Upper lobe of right lung (tissue), 1 donor: ENCODE measurements at regions of chr11 and their contacts with region 1.

Region 1: DNA sequence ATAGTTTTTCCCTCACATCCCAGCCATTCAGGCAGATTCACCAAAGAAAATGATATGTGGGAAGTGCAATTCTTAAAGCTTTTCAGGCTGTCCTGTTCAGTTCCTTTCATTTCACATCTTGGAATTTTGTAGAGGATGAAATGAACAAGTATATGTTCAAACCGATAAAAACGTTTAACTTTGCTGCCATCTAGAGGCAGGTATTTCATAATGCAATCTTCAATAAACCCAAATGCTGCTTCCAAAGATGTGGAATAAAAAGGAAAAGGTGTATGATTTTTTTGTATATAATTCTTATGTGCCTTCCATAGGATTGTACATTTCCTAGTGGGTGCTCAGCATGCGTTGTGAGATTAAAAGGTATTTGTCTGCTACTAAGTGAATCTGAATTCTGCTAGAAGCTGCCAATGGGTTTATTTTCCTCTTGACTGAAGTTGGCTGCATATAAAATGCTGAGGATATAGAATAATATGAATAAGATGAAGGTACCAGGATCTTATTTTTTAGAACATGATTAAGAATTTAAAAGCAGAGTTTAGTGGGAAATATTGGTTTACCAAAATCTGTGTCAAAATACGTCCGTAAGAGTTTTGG is 199.3 kb downstream of the PGR start:
- DNase-seq: no peak
- ATAC-seq: peak; percentile 56
- H3K4me3 ChIP-seq: no peak overlapping the region
- H3K27ac ChIP-seq: no peak overlapping the region
- H3K4me1 ChIP-seq: no peaks in the 10 kb centered on the region
- H3K27me3 ChIP-seq: no peaks in the 10 kb centered on the region
- CTCF ChIP-seq: peak; percentile 62

Region 2: DNA sequence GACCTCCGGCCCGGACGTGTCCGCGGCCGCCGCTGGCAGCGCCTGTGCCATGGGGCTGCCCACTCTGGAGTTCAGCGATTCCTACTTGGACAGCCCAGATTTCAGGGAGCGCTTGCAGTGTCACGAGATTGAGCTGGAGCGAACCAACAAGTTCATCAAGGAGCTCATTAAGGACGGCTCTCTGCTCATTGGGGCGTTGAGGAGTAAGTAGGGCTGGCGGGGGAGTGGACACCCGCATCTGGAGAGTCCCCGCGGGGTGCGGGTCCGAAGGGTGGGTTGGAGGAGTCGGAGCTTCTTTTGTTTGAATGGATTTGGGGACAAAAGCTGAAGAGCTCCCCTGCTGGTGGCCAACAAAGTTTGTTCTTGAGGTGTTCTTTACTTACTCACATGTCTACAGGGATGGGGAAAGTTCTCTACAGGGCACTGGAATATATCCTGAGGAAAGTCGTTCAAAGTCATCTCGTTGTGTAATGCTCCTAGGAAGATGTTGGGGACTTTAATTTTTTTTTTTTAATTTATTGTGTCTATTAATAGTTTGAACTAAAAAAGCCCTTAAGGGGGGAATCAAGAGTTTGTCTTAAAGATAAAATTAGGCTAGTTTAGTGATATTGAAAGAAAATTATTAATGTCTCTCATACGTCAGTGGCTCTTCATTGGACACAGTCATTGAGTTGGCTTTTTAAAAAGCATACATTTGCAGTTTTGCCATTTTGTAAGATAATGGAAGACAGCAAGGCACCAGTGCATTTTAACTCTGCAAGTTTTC is 242.5 kb before region 1 on chr11:
- intact Hi-C with region 1: loop called (anchors 10 kb)
- DNase-seq: peak; percentile 70
- ATAC-seq: peak; percentile 79
- H3K4me3 ChIP-seq: peak overlapping the region; percentile 60
- H3K27ac ChIP-seq: peak overlapping the region; percentile 71
- H3K4me1 ChIP-seq: no peaks in the 10 kb centered on the region
- H3K27me3 ChIP-seq: no peaks in the 10 kb centered on the region
- CTCF ChIP-seq: peak; percentile 50